CD4-positive, alpha-beta memory T cell (primary cell): ENCODE measurements at regions of chr9 and their contacts with region 1.

Region 1: DNA sequence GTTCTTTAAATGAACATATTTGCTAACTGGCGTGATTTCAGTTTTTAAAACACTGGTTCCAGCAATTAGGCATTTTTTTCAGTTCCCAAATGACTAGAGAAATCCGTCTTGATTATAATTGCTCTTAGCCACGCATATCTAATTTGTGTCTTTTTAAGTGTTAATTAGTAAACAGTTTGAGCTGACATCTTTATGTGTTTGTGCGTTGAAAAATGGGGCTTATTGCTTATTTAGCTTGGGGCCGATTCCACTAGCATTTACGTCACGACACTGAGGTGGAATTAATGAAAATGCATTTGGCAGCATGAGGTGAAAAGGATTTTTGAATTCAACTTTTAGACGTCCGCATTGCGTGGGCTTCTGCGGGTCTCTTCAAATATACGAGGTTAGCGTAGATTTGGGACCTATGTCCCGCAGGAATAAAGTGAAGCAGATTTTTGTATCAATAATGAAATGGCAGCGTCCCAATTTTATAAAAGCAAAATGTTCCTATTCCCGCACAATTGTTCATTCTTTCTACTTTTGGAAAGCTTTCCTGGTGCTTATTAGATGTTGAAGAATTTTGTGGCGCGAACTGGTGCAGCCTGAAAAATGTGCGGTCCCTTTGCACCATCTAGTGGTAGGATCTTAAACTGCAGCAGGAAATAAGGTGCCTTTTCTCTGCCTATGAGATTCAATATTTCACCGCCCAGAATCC is 122.7 kb upstream of the LMX1B start:
- DNase-seq: peak; percentile 54 to 72 (median 63)
- H3K4me3 ChIP-seq: no peak overlapping the region
- H3K4me3 Mint-ChIP-seq: peak overlapping the region in 3 of 8 donors; percentile 16 to 47 (median 31)
- H3K27ac ChIP-seq: no peak overlapping the region
- H3K27ac Mint-ChIP-seq: peak overlapping the region in 1 of 7 donors; percentile 62
- H3K4me1 ChIP-seq: peaks cover 13% of the 10 kb centered on the region
- H3K4me1 Mint-ChIP-seq: peaks cover 0 to 15% (median 10%) of the 10 kb centered on the region in 4 donors
- H3K27me3 ChIP-seq: no peaks in the 10 kb centered on the region
- H3K27me3 Mint-ChIP-seq: peaks cover 0 to 2% of the 10 kb centered on the region in 2 donors

Region 2: DNA sequence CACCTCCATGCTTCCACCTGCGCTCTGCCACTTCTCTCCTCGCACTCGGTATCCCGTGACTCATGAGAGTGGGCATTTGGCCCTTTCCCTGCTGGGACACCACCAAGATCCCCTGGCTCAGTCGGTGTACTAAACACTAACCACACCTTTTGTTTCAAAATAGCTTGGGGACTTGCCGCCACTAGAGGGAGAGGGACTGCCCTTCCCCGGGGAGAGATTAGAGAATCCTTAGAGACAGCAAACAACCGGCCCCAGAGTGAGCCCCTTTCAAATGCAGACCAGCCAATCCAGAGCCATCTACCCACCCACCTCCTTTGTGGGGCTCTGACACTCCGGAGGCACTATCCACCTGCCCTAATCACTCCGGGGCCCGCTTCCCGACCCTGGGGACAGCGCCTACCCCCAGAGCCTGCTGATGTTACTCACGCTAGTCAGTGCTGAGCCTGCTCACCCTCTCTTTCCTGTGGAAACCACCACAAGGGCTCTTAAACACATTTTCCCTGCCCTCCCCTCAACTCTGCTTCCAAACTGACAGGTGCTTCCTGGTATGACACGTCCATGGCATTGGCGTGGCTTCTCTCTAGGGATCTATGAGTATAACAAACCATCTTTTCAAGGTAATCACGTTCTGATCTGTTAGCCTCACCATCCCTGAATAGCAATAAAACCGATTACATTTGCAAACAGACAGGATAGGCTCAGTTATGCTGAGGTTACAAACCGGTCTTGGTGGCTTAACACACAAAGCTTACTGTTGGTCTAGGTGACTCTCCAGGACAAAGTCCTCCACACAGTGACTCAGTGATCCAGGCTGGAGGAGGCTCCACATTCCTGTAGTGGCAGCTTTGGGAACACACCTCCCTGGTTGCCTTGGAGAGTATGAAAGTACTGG is 344.5 kb before region 1 on chr9:
- CTCF ChIA-PET with region 1: interaction called, 3 read pairs
- POLR2A ChIA-PET with region 1: no interaction called
- intact Hi-C with region 1: loop called (anchors 2 kb)
- DNase-seq: no peak
- H3K4me3 ChIP-seq: no peak overlapping the region
- H3K4me3 Mint-ChIP-seq: peak overlapping the region in 2 of 8 donors; percentile 4 to 14
- H3K27ac ChIP-seq: no peak overlapping the region
- H3K27ac Mint-ChIP-seq: no peak overlapping the region
- H3K4me1 ChIP-seq: no peaks in the 10 kb centered on the region
- H3K4me1 Mint-ChIP-seq: peaks cover 0 to 4% (median 1%) of the 10 kb centered on the region in 4 donors
- H3K27me3 ChIP-seq: no peaks in the 10 kb centered on the region
- H3K27me3 Mint-ChIP-seq: peaks cover 24 to 40% of the 10 kb centered on the region in 2 donors

Region 3: DNA sequence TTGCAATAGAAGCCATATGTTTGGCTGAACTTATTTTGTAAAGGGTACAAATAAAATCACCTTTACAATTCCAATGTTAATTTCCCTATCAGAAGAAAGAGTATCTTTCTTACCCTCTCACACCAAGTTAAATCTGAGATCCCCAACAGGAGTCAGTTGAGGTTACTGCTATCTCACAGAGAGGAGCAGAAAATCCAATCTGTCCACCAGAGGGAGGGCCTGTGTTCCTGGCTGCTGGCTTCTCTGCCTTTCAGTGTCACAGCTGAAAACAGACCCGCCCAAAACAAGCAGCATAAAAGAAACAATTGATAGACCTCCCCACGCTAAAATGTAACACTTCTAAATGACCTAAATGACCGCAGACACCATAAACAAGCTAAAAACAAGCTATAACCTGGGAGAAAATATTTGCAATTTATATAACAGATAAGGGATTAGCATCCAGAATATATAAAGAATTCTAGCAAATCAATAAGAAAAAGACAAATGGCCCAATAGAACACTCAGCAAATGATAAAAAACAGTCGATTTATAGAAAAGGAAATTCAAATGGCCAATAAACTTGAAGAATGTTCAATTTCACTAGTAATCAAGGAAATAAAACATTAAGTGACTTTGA is 188.9 kb before region 1 on chr9:
- CTCF ChIA-PET with region 1: interaction called, 72 read pairs
- POLR2A ChIA-PET with region 1: no interaction called
- intact Hi-C with region 1: loop called (anchors 1 kb)
- DNase-seq: peak; percentile 54 to 70 (median 56)
- H3K4me3 ChIP-seq: no peak overlapping the region
- H3K4me3 Mint-ChIP-seq: no peak overlapping the region
- H3K27ac ChIP-seq: no peak overlapping the region
- H3K27ac Mint-ChIP-seq: peak overlapping the region in 2 of 7 donors; percentile 9 to 11
- H3K4me1 ChIP-seq: no peaks in the 10 kb centered on the region
- H3K4me1 Mint-ChIP-seq: peaks cover 2 to 5% (median 4%) of the 10 kb centered on the region in 4 donors
- H3K27me3 ChIP-seq: no peaks in the 10 kb centered on the region
- H3K27me3 Mint-ChIP-seq: no peaks in the 10 kb centered on the region

Region 4: GRCh38 chr9:126326228-126327005 is 164.6 kb before region 1 on chr9 and contains the start of gene MVB12B:
- CTCF ChIA-PET with region 1: interaction called, 18 read pairs
- POLR2A ChIA-PET with region 1: interaction called, 5 read pairs
- intact Hi-C with region 1: no loop called
- DNase-seq: peak; percentile 59 to 66 (median 61)
- H3K4me3 ChIP-seq: peak within 1 kb of the TSS in 1 of 2 donors; percentile 55
- H3K4me3 Mint-ChIP-seq: peak within 1 kb of the TSS; percentile 84 to 93 (median 86)
- H3K27ac ChIP-seq: peak within 1 kb of the TSS; percentile 50
- H3K27ac Mint-ChIP-seq: peak within 1 kb of the TSS; percentile 80 to 94 (median 88)
- H3K4me1 ChIP-seq: peaks cover 35% of the 10 kb centered on the region
- H3K4me1 Mint-ChIP-seq: peaks cover 27 to 42% (median 35%) of the 10 kb centered on the region in 4 donors
- H3K27me3 ChIP-seq: no peaks in the 10 kb centered on the region
- H3K27me3 Mint-ChIP-seq: no peaks in the 10 kb centered on the region
- total RNA-seq, gene MVB12B: 6.0 to 6.5 TPM

Region 5: GRCh38 chr9:126411225-126411947 is 79.6 kb before region 1 on chr9:
- CTCF ChIA-PET with region 1: interaction called, 3 read pairs
- POLR2A ChIA-PET with region 1: interaction called, 3 read pairs
- intact Hi-C with region 1: loop called (anchors 5 kb)
- DNase-seq: peak; percentile 63 to 82 (median 70)
- H3K4me3 ChIP-seq: peak overlapping the region; percentile 14 to 60
- H3K4me3 Mint-ChIP-seq: peak overlapping the region; percentile 53 to 91 (median 82)
- H3K27ac ChIP-seq: peak overlapping the region; percentile 28
- H3K27ac Mint-ChIP-seq: peak overlapping the region; percentile 81 to 98 (median 91)
- H3K4me1 ChIP-seq: peaks cover 31% of the 10 kb centered on the region
- H3K4me1 Mint-ChIP-seq: peaks cover 24 to 39% (median 28%) of the 10 kb centered on the region in 4 donors
- H3K27me3 ChIP-seq: no peaks in the 10 kb centered on the region
- H3K27me3 Mint-ChIP-seq: no peaks in the 10 kb centered on the region

Region 6: GRCh38 chr9:126471084-126471624 is 19.9 kb before region 1 on chr9:
- CTCF ChIA-PET with region 1: interaction called, 57 read pairs
- POLR2A ChIA-PET with region 1: interaction called, 17 read pairs
- intact Hi-C with region 1: loop called (anchors 1 kb)
- DNase-seq: peak; percentile 82 to 88 (median 85)
- H3K4me3 ChIP-seq: peak overlapping the region in 1 of 2 donors; percentile 27
- H3K4me3 Mint-ChIP-seq: peak overlapping the region; percentile 73 to 87 (median 80)
- H3K27ac ChIP-seq: peak overlapping the region; percentile 57
- H3K27ac Mint-ChIP-seq: peak overlapping the region; percentile 92 to 98 (median 96)
- H3K4me1 ChIP-seq: peaks cover 70% of the 10 kb centered on the region
- H3K4me1 Mint-ChIP-seq: peaks cover 62 to 90% (median 76%) of the 10 kb centered on the region in 4 donors
- H3K27me3 ChIP-seq: no peaks in the 10 kb centered on the region
- H3K27me3 Mint-ChIP-seq: no peaks in the 10 kb centered on the region